H1 (cell line): ENCODE measurements at regions of chr20 and their contacts with region 1.

Region 1: GRCh38 chr20:3786665-3787323 is at the start of gene CENPB:
- DNase-seq: peak in 1 of 2 experiments; percentile 96
- H3K4me3 ChIP-seq: peak within 1 kb of the TSS; percentile 42 to 69 (median 60)
- H3K27ac ChIP-seq: no peak within 1 kb of the TSS
- H3K4me1 ChIP-seq: peaks cover 0 to 13% (median 6%) of the 10 kb centered on the region in 4 experiments; a peak in 6 of 7 replicates
- H3K27me3 ChIP-seq: peaks cover 0 to 3% (median 0%) of the 10 kb centered on the region in 4 experiments; a peak in 3 of 7 replicates
- CTCF ChIP-seq: peak; percentile 63 to 99 (median 92)
- EP300 ChIP-seq: no peak
- POLR2A ChIP-seq: no peak
- RAD21 ChIP-seq: peak; percentile 76 to 86
- total RNA-seq, gene CENPB: 51.6 and 52.8 TPM in 2 replicates

Region 2: GRCh38 chr20:3767427-3768341 is 19.1 kb before region 1 on chr20 and contains the start of gene ADISSP:
- CTCF ChIA-PET with region 1: interaction called, 11 read pairs
- POLR2A ChIA-PET with region 1: interaction called, 4 read pairs
- DNase-seq: peak; percentile 97
- H3K4me3 ChIP-seq: peak within 1 kb of the TSS; percentile 74 to 94 (median 88)
- H3K27ac ChIP-seq: peak within 1 kb of the TSS; percentile 66; the same call in 1 of the 2 replicates
- H3K4me1 ChIP-seq: peaks cover 3 to 15% (median 6%) of the 10 kb centered on the region in 4 experiments; a peak in 6 of 7 replicates
- H3K27me3 ChIP-seq: no peaks in the 10 kb centered on the region
- CTCF ChIP-seq: peak in 2 of 3 experiments; percentile 13 to 35; a peak in 2 of 4 replicates
- EP300 ChIP-seq: no peak
- POLR2A ChIP-seq: peak in 1 of 2 experiments; percentile 71; a peak in 2 of 3 replicates
- RAD21 ChIP-seq: no peak
- total RNA-seq, gene ADISSP: 111 and 117 TPM in 2 replicates

Region 3: GRCh38 chr20:3820048-3820900 is 33.5 kb after region 1 on chr20 and contains the start of gene AP5S1:
- CTCF ChIA-PET with region 1: interaction called, 128 read pairs
- POLR2A ChIA-PET with region 1: interaction called, 20 read pairs
- DNase-seq: peak; percentile 89 to 98
- H3K4me3 ChIP-seq: peak within 1 kb of the TSS; percentile 79 to 96 (median 90)
- H3K27ac ChIP-seq: peak within 1 kb of the TSS; percentile 92
- H3K4me1 ChIP-seq: peaks cover 0 to 13% (median 5%) of the 10 kb centered on the region in 4 experiments; a peak in 4 of 7 replicates
- H3K27me3 ChIP-seq: no peaks in the 10 kb centered on the region
- CTCF ChIP-seq: peak; percentile 83 to 96 (median 88)
- EP300 ChIP-seq: peak in 1 of 2 experiments; percentile 36; a peak in 1 of 3 replicates
- POLR2A ChIP-seq: peak; percentile 76 to 83
- RAD21 ChIP-seq: peak; percentile 69 to 81
- total RNA-seq, gene AP5S1: 3.4 and 3.7 TPM in 2 replicates

Region 4: DNA sequence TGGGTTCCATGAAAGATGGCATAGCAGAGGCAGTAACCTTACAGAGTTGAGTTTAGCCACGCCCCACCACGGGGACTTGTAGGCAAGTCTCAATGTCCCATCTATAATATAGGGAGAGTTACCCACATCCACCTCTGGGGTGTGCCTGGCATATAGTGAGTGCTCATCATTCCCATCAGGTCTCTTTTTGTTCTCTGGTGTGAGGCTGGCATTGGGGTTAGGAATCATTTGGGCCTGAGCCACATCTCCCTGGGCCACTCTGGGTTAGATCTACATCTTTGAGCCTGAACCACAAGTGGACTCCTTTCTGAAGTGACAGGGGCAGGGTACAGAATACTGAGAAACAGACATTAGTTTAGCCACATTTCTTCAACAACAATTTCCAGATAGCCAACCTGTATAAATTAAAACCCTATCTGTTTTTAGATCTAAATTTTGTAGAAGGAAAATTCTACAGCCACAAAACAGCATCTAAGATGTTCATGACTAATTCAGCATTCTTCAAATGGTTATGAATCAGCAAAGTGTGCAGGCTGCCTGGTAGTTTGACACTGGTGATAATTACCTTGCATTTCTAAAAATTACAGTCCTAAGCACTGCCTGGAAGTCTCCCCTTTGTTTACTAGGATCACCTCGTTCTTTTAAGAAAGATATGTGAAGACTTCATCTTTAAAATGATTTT is 208.4 kb after region 1 on chr20:
- CTCF ChIA-PET with region 1: no interaction called
- POLR2A ChIA-PET with region 1: no interaction called
- DNase-seq: no peak
- H3K4me3 ChIP-seq: no peak overlapping the region
- H3K27ac ChIP-seq: no peak overlapping the region
- H3K4me1 ChIP-seq: no peaks in the 10 kb centered on the region
- H3K27me3 ChIP-seq: no peaks in the 10 kb centered on the region
- CTCF ChIP-seq: no peak
- EP300 ChIP-seq: no peak
- POLR2A ChIP-seq: no peak
- RAD21 ChIP-seq: no peak